ENCODE measurements at regions of chr7 and their contacts with region 1.

Region 1: GRCh38 chr7:87933945-87934698 is at the start of gene ADAM22:
- H3K4me3 ChIP-seq: peak within 1 kb of the TSS; percentile 87
- H3K27ac ChIP-seq: peak within 1 kb of the TSS; percentile 70
- H3K4me1 ChIP-seq: peaks cover 4% of the 10 kb centered on the region; the same call in 1 of the 2 replicates
- CTCF ChIP-seq: peak; percentile 66; the same call in 1 of the 2 replicates

Region 2: DNA sequence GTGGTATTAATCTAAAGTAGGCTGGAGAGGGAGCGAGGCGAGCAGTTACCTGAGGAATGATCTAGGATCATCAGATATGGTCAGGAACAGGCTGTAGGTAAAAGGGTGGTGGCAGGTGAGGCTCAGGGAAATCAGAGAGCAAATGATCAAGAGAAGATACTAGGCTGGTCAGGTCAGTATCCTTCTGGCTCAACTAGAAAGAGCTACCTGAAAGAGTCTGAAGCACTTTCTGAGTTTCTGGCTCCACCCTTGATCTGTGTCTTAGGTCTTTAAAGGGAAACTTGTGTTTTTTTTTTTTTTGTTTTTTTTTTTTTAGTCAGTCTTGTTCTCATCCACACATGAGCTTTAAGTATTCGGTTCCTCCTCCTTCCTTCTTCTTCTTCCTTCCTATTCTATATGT is 10.4 kb after region 1 on chr7:
- CTCF ChIA-PET with region 1: no interaction called
- POLR2A ChIA-PET with region 1: interaction called, 13 read pairs
- H3K4me3 ChIP-seq: no peak overlapping the region
- H3K27ac ChIP-seq: no peak overlapping the region
- H3K4me1 ChIP-seq: peaks cover 4% of the 10 kb centered on the region
- CTCF ChIP-seq: no peak